MCF 10A (cell line): ENCODE measurements at regions of chr20 and their contacts with region 1.

Region 1: DNA sequence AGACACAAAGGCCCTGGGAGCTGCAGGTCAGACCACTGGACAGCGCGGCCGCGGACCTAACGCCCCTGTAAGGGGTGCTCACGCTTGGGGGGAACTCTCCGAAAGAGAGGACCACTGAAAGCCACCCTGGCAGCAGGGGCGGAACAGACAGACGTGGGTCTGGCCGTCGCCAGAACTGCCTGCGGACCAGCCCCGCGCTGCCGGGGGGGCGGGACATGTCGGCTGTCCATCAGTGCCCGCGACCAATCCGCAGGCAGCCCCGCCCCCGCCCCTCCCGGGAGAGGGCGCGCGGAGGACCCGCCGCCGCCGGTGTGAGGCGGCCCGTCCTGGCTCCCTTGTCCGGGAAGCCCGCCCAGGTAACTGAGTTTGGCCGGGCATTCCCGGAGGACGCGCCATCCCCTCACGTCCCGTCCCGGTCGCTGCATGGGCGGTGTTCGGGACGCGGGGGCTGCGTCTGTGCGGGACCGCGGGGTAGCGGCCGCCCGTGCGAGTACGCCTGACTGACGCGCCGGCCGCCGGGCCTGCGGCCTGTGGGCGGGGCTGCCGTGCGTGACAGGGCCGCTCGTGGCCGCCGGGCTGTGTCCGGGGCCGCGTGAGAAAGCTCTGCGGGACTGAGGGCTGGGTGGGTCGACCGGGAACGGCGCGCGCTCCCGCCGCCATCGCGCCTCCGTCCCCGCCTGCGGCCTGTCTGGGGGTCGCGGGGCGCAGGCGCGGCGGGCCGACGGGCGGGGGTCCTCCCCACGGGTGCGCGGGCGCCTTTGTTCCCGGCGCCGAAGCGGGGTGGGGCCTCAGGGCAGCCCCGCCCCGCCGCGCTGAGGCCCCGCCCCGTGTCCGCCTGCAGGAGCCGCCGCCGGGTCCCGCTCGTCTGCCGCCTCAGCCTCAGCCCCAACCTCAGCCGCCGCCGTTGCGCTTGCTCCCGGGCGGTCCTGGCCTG is at the start of gene PLCG1:
- DNase-seq: peak; percentile 83
- H3K4me3 Mint-ChIP-seq: peak within 1 kb of the TSS; percentile 79
- H3K27ac Mint-ChIP-seq: peak within 1 kb of the TSS; percentile 42
- H3K4me1 Mint-ChIP-seq: peaks cover 61% of the 10 kb centered on the region
- H3K27me3 Mint-ChIP-seq: no peaks in the 10 kb centered on the region
- CTCF ChIP-seq: no peak
- total RNA-seq, gene PLCG1: 33.2 and 48.1 TPM in 2 replicates

Region 2: GRCh38 chr20:40977218-40977617 is 159.7 kb before region 1 on chr20:
- CTCF ChIA-PET with region 1: no interaction called
- POLR2A ChIA-PET with region 1: no interaction called
- intact Hi-C with region 1: no loop called
- DNase-seq: no peak
- H3K4me3 Mint-ChIP-seq: no peak overlapping the region
- H3K27ac Mint-ChIP-seq: no peak overlapping the region
- H3K4me1 Mint-ChIP-seq: peaks cover 16% of the 10 kb centered on the region
- H3K27me3 Mint-ChIP-seq: no peaks in the 10 kb centered on the region
- CTCF ChIP-seq: no peak

Region 3: DNA sequence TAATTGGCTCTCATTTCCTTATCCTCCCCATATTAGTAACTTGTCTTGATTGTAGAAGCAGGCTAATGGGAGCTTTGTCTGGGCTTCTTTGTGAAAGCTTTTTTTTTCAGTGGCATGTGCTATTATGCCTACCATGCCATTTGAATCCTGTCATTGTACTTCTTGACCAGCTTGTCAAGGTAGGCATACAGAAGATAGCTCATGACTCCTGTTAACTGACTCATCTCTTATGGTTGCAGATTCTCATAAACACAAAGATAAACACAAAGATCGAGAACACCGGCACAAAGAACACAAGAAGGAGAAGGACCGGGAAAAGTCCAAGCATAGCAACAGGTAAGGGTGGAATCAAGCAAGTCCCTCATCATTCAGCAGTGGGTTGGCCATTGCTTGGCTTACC is 75.8 kb before region 1 on chr20:
- CTCF ChIA-PET with region 1: no interaction called
- POLR2A ChIA-PET with region 1: no interaction called
- intact Hi-C with region 1: no loop called
- DNase-seq: no peak
- H3K4me3 Mint-ChIP-seq: no peak overlapping the region
- H3K27ac Mint-ChIP-seq: no peak overlapping the region
- H3K4me1 Mint-ChIP-seq: peaks cover 32% of the 10 kb centered on the region
- H3K27me3 Mint-ChIP-seq: no peaks in the 10 kb centered on the region
- CTCF ChIP-seq: no peak

Region 4: DNA sequence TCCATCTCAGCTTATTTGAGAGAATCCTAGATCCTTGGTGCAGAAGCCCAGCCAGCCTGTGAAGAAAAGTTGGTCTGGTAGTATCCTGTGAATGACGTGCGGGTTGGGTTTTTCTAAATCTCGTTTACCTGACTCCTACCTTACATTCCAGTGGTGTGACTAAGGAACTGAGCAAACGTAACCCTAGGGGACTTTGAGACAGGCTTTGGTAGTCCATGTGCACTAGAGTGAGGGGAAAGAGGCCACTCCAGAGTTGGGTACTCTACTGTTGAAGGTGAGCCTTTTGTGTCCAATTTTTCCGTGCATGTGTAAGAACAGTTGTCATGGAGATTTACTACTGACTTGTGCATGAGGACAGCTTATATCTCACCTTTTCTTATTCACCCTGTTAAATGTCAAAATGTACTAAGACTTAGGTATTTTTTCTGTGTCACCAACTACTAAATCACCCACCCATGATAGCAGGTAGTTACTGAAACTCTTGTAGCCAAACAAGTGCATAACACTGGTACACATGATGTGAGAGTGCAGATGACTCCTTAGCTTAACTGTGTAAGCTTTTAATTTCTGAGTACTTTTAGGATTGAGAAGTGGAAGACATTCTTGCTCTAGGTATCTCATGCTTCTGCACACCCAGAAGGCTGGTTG is 25.9 kb before region 1 on chr20:
- CTCF ChIA-PET with region 1: interaction called, 11 read pairs
- POLR2A ChIA-PET with region 1: interaction called, 3 read pairs
- intact Hi-C with region 1: no loop called
- DNase-seq: no peak
- H3K4me3 Mint-ChIP-seq: no peak overlapping the region
- H3K27ac Mint-ChIP-seq: no peak overlapping the region
- H3K4me1 Mint-ChIP-seq: peaks cover 5% of the 10 kb centered on the region
- H3K27me3 Mint-ChIP-seq: no peaks in the 10 kb centered on the region
- CTCF ChIP-seq: no peak

Region 5: GRCh38 chr20:41149679-41150131 is 12.8 kb after region 1 on chr20:
- CTCF ChIA-PET with region 1: interaction called, 13 read pairs
- POLR2A ChIA-PET with region 1: interaction called, 6 read pairs
- intact Hi-C with region 1: no loop called
- DNase-seq: peak; percentile 56
- H3K4me3 Mint-ChIP-seq: no peak overlapping the region
- H3K27ac Mint-ChIP-seq: no peak overlapping the region
- H3K4me1 Mint-ChIP-seq: peaks cover 27% of the 10 kb centered on the region
- H3K27me3 Mint-ChIP-seq: no peaks in the 10 kb centered on the region
- CTCF ChIP-seq: no peak

Region 6: GRCh38 chr20:41185013-41185757 is 48.2 kb after region 1 on chr20:
- CTCF ChIA-PET with region 1: interaction called, 10 read pairs
- POLR2A ChIA-PET with region 1: no interaction called
- intact Hi-C with region 1: no loop called
- DNase-seq: no peak
- H3K4me3 Mint-ChIP-seq: no peak overlapping the region
- H3K27ac Mint-ChIP-seq: peak overlapping the region; percentile 69
- H3K4me1 Mint-ChIP-seq: peaks cover 11% of the 10 kb centered on the region
- H3K27me3 Mint-ChIP-seq: no peaks in the 10 kb centered on the region
- CTCF ChIP-seq: no peak

Region 7: GRCh38 chr20:41317536-41318270 is 180.8 kb after region 1 on chr20 and contains the start of gene ZHX3:
- CTCF ChIA-PET with region 1: interaction called, 9 read pairs
- POLR2A ChIA-PET with region 1: interaction called, 4 read pairs
- intact Hi-C with region 1: loop called (anchors 10 kb)
- DNase-seq: peak; percentile 96
- H3K4me3 Mint-ChIP-seq: peak within 1 kb of the TSS; percentile 99
- H3K27ac Mint-ChIP-seq: peak within 1 kb of the TSS; percentile 63
- H3K4me1 Mint-ChIP-seq: peaks cover 29% of the 10 kb centered on the region
- H3K27me3 Mint-ChIP-seq: no peaks in the 10 kb centered on the region
- CTCF ChIP-seq: no peak
- total RNA-seq, gene ZHX3: 23.8 and 34.1 TPM in 2 replicates

Region 8: GRCh38 chr20:41411391-41411847 is 274.5 kb after region 1 on chr20:
- CTCF ChIA-PET with region 1: interaction called, 9 read pairs
- POLR2A ChIA-PET with region 1: interaction called, 3 read pairs
- intact Hi-C with region 1: loop called (anchors 5 kb)
- DNase-seq: peak; percentile 9
- H3K4me3 Mint-ChIP-seq: no peak overlapping the region
- H3K27ac Mint-ChIP-seq: no peak overlapping the region
- H3K4me1 Mint-ChIP-seq: no peaks in the 10 kb centered on the region
- H3K27me3 Mint-ChIP-seq: no peaks in the 10 kb centered on the region
- CTCF ChIP-seq: peak; percentile 41